Sciatic nerve (tissue), 2 donors: ENCODE measurements at regions of chr7 and their contacts with region 1.

Region 1: DNA sequence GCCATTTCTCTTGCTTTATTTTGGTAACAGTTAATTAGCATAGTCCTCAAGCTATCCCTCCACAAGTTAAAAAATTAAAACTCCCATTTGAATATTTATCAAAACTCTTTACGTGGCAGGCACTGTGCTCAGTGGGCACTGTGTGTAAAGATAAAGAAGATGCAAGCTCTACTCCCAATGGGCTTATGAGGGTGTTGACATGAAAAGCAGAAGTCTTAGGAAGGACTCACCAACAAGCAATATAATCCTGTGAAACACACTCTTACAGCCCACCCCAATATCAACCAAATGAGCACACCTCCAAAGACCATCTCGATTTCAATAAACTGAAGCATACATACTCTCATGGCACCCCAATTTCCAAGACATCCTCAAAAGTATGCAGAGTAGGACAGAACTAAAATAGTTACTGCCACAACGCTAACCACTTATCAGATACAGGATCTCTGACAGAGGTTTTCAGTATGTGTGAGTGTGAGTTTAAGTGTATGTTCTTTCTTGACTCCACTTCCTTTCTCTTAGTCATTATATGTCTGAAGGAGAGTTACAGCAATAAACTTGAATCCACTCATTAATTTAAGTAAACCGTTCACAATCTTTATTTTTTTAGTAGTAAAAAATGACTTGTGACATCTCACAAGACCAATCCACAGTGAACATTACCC is 120.0 kb downstream of the PDE1C start:
- DNase-seq: no peak
- ATAC-seq: no peak

Region 2: GRCh38 chr7:30231271-30231670 is 1719.0 kb before region 1 on chr7:
- intact Hi-C with region 1: loop called (anchors 5 kb)
- DNase-seq: no peak
- ATAC-seq: no peak